CD8-positive, alpha-beta T cell (primary cell): ENCODE measurements at regions of chr4 and their contacts with region 1.

Region 1: GRCh38 chr4:86043755-86044592 is 315.9 kb downstream of the MAPK10 start:
- DNase-seq: peak in 2 of 9 experiments; percentile 7 to 24
- ATAC-seq: no peak
- H3K4me3 ChIP-seq: no peak overlapping the region
- H3K4me3 Mint-ChIP-seq: no peak overlapping the region
- H3K27ac ChIP-seq: no peak overlapping the region
- H3K27ac Mint-ChIP-seq: no peak overlapping the region
- H3K4me1 ChIP-seq: no peaks in the 10 kb centered on the region
- H3K4me1 Mint-ChIP-seq: no peaks in the 10 kb centered on the region
- H3K27me3 ChIP-seq: no peaks in the 10 kb centered on the region
- H3K27me3 Mint-ChIP-seq: no peaks in the 10 kb centered on the region
- CTCF ChIP-seq: peak; percentile 59

Region 2: GRCh38 chr4:85147439-85148076 is 896.4 kb before region 1 on chr4:
- CTCF ChIA-PET with region 1: no interaction called
- POLR2A ChIA-PET with region 1: no interaction called
- intact Hi-C with region 1: loop called in 1 of 2 experiments (anchors 5 kb)
- DNase-seq: peak in 2 of 9 experiments; percentile 5 to 21
- ATAC-seq: no peak
- H3K4me3 ChIP-seq: no peak overlapping the region
- H3K4me3 Mint-ChIP-seq: no peak overlapping the region
- H3K27ac ChIP-seq: no peak overlapping the region
- H3K27ac Mint-ChIP-seq: no peak overlapping the region
- H3K4me1 ChIP-seq: no peaks in the 10 kb centered on the region
- H3K4me1 Mint-ChIP-seq: no peaks in the 10 kb centered on the region
- H3K27me3 ChIP-seq: no peaks in the 10 kb centered on the region
- H3K27me3 Mint-ChIP-seq: peaks cover 3% of the 10 kb centered on the region
- CTCF ChIP-seq: peak; percentile 24